ENCODE measurements at regions of chr20 and their contacts with region 1.

Region 1: GRCh38 chr20:59269411-59270025 is 30.9 kb upstream of the EDN3 start:
- DNase-seq: no peak
- ATAC-seq: no peak
- H3K4me3 ChIP-seq: no peak overlapping the region
- H3K4me3 Mint-ChIP-seq: no peak overlapping the region
- H3K27ac ChIP-seq: no peak overlapping the region
- H3K27ac Mint-ChIP-seq: no peak overlapping the region
- H3K4me1 ChIP-seq: peaks cover 6% of the 10 kb centered on the region
- H3K4me1 Mint-ChIP-seq: peaks cover 29% of the 10 kb centered on the region
- H3K27me3 ChIP-seq: peaks cover 0 to 5% of the 10 kb centered on the region in 2 experiments
- H3K27me3 Mint-ChIP-seq: no peaks in the 10 kb centered on the region
- CTCF ChIP-seq: no peak

Region 2: DNA sequence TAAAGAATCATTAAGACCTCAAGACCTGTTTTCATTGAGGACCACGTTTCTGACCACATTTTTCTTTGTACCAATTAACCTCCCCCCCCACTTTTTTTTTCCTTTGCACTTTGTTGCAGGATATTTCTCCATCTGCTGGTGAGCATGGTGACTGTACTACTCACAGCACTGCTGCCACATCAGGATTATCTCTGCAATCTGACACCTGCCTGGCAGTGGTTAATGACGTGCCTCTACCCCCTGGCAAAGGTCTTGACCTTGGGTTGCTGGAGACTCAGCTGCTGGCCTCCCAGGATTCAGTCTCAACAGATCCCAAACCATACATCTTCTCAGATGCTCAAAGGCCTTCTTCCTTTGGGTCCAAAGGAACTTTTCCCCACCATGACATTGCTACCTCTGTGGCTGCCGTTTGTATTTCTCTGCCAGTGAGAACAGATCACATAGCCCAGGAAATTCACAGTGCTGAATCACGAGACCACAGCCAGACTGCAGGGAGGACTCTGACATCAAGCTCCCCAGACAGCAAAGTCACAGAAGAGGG is 15.7 kb before region 1 on chr20:
- CTCF ChIA-PET with region 1: interaction called, 3 read pairs
- POLR2A ChIA-PET with region 1: interaction called, 11 read pairs
- intact Hi-C with region 1: no loop called
- DNase-seq: peak in 12 of 14 experiments; percentile 11 to 64 (median 30)
- ATAC-seq: peak; percentile 63
- H3K4me3 ChIP-seq: no peak overlapping the region
- H3K4me3 Mint-ChIP-seq: peak overlapping the region; percentile 78
- H3K27ac ChIP-seq: peak overlapping the region; percentile 46 to 51
- H3K27ac Mint-ChIP-seq: peak overlapping the region; percentile 94
- H3K4me1 ChIP-seq: peaks cover 28% of the 10 kb centered on the region
- H3K4me1 Mint-ChIP-seq: peaks cover 82% of the 10 kb centered on the region
- H3K27me3 ChIP-seq: no peaks in the 10 kb centered on the region
- H3K27me3 Mint-ChIP-seq: no peaks in the 10 kb centered on the region
- CTCF ChIP-seq: no peak

Measured in CD4-positive, alpha-beta T cell (primary cell).